ENCODE measurements at regions of chr1 and their contacts with region 1.

Region 1: GRCh38 chr1:218345673-218346390 is 696 bp downstream of the TGFB2 start:
- DNase-seq: peak; percentile 53 to 72
- ATAC-seq: peak; percentile 77 to 93 (median 82)
- H3K4me3 ChIP-seq: peak overlapping the region; percentile 65 to 86 (median 70)
- H3K27ac ChIP-seq: peak overlapping the region; percentile 39 to 95 (median 83)
- H3K4me1 ChIP-seq: peaks cover 0 to 46% (median 23%) of the 10 kb centered on the region in 9 donors
- H3K27me3 ChIP-seq: peaks cover 0 to 34% (median 0%) of the 10 kb centered on the region in 7 donors
- CTCF ChIP-seq: peak in 2 of 9 donors; percentile 16 to 22

Region 2: DNA sequence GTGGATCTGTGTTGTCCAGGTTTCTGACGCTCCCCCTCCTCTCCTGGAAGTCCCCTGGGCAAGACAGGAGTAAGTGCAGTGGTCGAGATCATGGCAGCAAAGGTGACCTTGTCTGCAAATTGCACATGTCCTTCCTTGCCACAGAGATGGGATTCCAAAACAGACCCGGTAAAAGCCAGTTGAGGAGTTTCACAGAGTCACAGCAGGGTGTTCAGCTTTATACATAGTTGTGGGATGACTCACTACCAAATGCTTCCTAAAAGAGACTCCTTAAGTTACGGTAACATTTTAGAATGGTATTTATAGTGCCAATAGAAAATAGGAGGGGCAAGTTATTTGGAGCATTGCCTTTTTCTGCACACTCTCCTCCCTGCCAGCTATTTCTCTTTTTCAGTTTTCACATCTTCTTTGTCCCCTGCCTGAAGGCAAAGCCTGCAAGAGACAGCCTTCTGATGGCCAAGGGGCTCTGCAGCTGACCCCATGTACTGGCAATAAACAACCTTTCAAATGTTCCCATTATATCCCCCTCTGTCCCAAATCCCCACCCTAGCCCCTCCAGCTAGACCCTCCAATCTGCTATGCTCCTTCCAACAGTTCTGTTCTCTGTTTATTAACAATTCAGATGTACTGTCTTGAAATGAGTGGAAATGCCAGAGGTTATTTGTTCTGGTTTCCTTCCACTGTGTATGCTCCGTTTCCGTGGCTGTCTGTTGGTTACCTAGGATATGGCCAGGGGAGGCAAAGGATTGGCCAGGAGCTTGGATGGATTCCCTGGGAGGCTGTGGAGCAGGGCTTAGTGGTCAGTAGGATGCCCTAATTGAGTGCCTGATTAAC is 114.3 kb after region 1 on chr1:
- intact Hi-C with region 1: loop called in 4 of 10 experiments (anchors 5 to 10 kb)
- DNase-seq: peak in 1 of 2 donors; percentile 60
- ATAC-seq: peak; percentile 50 to 90 (median 88)
- H3K4me3 ChIP-seq: peak overlapping the region in 5 of 10 donors; percentile 5 to 22 (median 13)
- H3K27ac ChIP-seq: peak overlapping the region; percentile 34 to 90 (median 74)
- H3K4me1 ChIP-seq: peaks cover 14 to 55% (median 47%) of the 10 kb centered on the region in 9 donors
- H3K27me3 ChIP-seq: no peaks in the 10 kb centered on the region
- CTCF ChIP-seq: no peak

Region 3: GRCh38 chr1:218510153-218510772 is 164.4 kb after region 1 on chr1:
- intact Hi-C with region 1: loop called in 1 of 10 experiments (anchors 10 kb)
- DNase-seq: no peak
- ATAC-seq: no peak
- H3K4me3 ChIP-seq: no peak overlapping the region
- H3K27ac ChIP-seq: no peak overlapping the region
- H3K4me1 ChIP-seq: no peaks in the 10 kb centered on the region
- H3K27me3 ChIP-seq: no peaks in the 10 kb centered on the region
- CTCF ChIP-seq: no peak

Region 4: DNA sequence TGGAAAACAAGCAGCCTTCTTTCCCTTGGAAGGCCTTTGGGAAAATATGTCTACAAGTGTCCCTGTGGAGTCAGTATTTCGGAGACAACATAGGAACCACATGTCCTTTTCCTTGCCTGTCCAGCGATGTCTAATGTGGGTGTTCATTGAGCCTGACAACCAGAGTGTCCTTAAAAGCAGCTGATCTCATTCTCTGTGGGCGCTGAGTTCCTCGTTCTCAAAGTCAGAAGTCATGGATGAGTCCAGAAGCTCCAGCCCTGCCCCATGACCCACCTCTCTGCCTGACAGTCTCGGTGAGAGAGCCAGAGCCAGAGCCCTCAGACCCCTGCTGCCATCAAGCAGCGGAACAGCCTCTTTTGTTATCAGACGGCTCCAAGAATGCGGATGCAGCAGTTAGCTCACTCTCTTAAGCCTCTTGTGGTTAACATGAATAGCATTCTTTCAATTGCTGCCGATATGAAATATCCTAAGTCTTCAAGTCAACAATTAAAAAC is 328.5 kb after region 1 on chr1:
- intact Hi-C with region 1: loop called in 1 of 10 experiments (anchors 10 kb)
- DNase-seq: peak in 1 of 2 donors; percentile 11
- ATAC-seq: peak in 6 of 8 donors; percentile 61 to 90 (median 76)
- H3K4me3 ChIP-seq: peak overlapping the region in 7 of 10 donors; percentile 6 to 43 (median 31)
- H3K27ac ChIP-seq: peak overlapping the region in 5 of 10 donors; percentile 29 to 54 (median 49)
- H3K4me1 ChIP-seq: peaks cover 0 to 11% (median 0%) of the 10 kb centered on the region in 9 donors
- H3K27me3 ChIP-seq: no peaks in the 10 kb centered on the region
- CTCF ChIP-seq: peak in 2 of 9 donors; percentile 11 to 33

Region 5: DNA sequence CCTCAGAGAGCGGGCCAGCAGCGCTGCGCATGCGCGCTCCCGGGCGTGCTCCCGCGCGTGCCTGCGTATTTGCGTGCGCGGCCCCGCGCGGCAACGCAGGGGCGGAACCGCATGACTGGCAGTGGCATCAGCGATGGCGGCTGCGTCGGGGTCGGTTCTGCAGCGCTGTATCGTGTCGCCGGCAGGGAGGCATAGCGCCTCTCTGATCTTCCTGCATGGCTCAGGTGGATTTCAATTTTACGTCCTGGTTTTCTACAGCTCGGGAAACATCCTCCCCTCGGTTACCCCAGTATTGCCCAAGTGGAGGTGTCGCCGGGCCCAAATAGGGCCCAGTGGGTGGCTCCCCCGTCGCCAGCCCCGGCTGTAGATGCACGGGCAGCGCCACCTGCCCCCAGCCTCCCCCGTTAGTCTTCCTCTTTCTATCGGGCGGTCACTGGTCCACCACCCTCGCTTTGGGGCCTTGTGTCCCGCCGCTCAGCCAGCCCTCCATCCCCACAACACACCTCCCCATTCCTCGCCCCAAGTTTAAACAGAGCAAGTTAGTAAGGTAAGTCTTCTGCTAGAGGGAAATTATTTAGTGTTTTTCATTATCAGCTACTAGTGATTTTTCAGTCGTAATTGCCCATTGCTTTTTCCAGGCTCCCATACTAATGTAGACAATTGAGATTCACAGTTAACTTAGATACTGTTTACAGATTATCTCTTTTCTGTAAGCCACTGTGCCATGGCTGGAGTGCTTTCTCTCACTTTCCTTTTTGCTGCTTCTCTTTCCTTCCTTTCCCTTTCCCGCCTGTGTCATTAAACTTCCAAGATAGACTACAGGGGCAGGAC is 828.1 kb after region 1 on chr1 and contains the start of gene LYPLAL1:
- intact Hi-C with region 1: loop called in 1 of 10 experiments (anchors 10 kb)
- DNase-seq: peak; percentile 89 to 93
- ATAC-seq: peak; percentile 94 to 98 (median 96)
- H3K4me3 ChIP-seq: peak within 1 kb of the TSS; percentile 63 to 90 (median 78)
- H3K27ac ChIP-seq: peak within 1 kb of the TSS; percentile 72 to 95 (median 92)
- H3K4me1 ChIP-seq: peaks cover 0 to 67% (median 41%) of the 10 kb centered on the region in 9 donors
- H3K27me3 ChIP-seq: no peaks in the 10 kb centered on the region
- CTCF ChIP-seq: peak in 5 of 9 donors; percentile 12 to 42 (median 25)
- total RNA-seq, gene LYPLAL1: 65.9 to 186 (median 120) TPM

Measured in heart right ventricle (tissue), 16 donors.